GM10248 (cell line): ENCODE measurements at regions of chr11 and their contacts with region 1.

Region 1: DNA sequence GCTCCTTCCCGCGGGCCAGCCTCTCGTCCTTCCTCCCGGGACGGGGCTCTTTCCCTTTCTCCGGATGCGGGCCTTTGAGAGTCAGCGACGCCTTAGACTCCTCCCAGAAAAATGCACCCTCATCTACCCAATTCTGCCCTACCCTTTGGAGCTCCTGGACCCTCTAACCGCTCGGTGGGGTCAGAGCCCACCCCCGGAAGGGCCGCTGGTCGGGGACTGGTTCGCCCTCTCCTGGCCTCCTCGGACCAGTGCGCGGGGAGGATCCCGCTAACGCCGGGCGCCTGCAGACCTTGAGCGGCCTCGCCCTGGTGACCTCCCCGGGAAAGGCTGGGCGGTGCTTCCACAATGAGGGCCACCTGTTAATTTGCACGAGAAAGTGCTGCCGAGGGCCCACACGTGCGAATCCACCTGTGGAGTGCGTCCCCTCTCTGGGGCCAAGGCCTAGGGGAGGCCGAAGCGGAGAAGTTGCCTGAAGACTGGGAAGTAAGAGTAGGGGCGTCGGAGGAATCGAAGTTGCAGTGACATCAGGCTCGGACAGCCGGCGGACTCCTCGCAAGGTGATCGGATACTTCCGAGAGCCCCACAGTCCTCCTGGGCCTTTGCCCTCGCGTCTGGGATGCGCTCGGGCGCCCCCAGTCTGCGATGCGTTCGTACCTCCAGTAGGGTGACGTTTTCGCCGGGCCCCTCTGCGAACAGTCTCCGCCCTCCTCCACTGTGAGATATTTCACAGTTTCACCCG is 61.5 kb downstream of the ENDOD1 start:
- DNase-seq: peak; percentile 93
- CTCF ChIP-seq: peak; percentile 84

Region 2: GRCh38 chr11:94873916-94874540 is 277.1 kb before region 1 on chr11:
- CTCF ChIA-PET with region 1: no interaction called
- POLR2A ChIA-PET with region 1: no interaction called
- DNase-seq: no peak
- CTCF ChIP-seq: no peak

Region 3: DNA sequence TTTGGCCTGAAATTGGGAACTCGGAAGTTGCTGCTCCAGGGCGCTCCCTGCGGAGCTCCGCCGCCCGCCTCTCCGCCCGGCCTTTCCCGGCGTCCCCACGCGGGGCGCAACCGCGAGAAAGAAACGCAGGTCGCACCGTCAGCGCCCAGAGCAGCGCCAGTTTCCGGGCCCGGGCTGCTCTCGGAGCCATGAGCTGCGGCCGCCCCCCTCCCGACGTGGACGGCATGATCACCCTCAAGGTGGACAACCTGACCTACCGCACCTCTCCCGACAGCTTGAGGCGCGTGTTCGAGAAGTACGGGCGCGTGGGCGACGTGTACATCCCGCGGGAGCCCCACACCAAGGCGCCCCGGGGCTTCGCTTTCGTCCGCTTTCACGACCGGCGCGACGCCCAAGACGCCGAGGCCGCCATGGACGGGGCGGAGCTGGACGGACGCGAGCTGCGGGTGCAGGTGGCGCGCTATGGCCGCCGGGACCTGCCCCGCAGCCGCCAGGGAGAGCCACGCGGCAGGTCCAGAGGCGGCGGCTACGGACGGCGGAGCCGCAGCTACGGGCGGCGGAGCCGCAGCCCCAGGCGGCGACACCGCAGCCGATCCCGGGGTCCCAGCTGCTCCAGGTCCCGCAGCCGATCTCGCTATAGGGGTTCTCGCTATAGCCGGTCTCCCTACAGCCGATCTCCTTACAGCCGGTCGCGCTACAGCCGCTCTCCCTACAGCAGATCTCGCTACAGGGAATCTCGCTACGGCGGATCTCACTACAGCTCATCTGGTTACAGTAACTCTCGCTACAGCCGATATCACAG is 83.9 kb before region 1 on chr11:
- CTCF ChIA-PET with region 1: interaction called, 32 read pairs
- POLR2A ChIA-PET with region 1: no interaction called
- DNase-seq: peak; percentile 58
- CTCF ChIP-seq: peak; percentile 47

Region 4: DNA sequence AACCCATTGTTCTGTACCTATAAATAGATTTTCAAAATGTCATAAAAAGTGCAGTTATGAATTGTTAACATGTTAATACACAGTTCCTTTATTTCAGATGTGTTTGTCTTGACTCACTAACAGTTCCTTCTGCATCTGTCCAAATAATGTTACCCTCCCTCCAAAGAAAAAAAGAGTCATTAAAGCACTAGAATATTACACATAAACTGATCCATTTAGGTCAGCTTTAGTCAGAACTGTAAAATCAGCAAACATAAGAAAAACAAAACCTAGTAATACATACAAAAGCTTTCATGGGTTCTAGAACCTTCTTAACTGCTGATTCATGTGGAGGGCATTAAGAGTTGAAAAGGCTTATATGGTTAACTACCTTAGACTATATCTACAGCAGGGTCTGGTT is 14.5 kb after region 1 on chr11:
- CTCF ChIA-PET with region 1: interaction called, 36 read pairs
- POLR2A ChIA-PET with region 1: no interaction called
- DNase-seq: no peak
- CTCF ChIP-seq: no peak

Region 5: GRCh38 chr11:95352733-95353346 is 201.7 kb after region 1 on chr11:
- CTCF ChIA-PET with region 1: no interaction called
- POLR2A ChIA-PET with region 1: no interaction called
- DNase-seq: no peak
- CTCF ChIP-seq: no peak

Region 6: GRCh38 chr11:95692526-95693260 is 541.6 kb after region 1 on chr11:
- CTCF ChIA-PET with region 1: interaction called, 391 read pairs
- POLR2A ChIA-PET with region 1: no interaction called
- DNase-seq: no peak
- CTCF ChIP-seq: no peak

Region 7: DNA sequence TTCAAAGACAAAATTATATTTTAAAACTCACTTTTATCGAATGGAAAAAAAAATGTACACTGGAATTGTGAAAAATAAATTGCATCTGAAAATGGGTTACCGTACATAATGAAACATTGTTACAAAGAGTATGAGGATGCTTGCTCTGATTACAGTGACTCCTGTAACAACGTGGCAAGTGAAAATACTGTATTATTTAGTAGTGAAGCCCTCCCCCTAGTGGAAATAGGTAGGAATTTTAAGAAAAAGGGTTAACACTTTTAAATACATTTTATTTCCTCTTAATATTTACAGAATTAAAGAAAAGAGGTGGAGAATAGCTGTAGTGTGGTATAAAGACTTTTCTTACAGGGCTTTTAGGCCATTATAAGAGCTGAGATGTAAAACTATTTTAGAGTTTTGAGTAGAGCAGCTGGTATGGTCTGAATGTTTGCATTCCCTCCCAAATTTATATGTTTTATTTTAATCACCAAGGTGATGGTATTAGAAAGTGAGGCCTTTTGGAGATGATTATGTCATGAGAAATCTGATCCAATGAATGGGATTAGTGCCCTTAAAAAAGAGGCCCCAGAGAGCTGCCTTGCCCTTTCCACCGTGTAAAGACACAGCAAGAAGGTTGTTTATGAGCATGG is 613.3 kb after region 1 on chr11:
- CTCF ChIA-PET with region 1: interaction called, 263 read pairs
- POLR2A ChIA-PET with region 1: no interaction called
- DNase-seq: peak; percentile 48
- CTCF ChIP-seq: peak; percentile 31